ENCODE measurements at regions of chr9 and their contacts with region 1.

Region 1: DNA sequence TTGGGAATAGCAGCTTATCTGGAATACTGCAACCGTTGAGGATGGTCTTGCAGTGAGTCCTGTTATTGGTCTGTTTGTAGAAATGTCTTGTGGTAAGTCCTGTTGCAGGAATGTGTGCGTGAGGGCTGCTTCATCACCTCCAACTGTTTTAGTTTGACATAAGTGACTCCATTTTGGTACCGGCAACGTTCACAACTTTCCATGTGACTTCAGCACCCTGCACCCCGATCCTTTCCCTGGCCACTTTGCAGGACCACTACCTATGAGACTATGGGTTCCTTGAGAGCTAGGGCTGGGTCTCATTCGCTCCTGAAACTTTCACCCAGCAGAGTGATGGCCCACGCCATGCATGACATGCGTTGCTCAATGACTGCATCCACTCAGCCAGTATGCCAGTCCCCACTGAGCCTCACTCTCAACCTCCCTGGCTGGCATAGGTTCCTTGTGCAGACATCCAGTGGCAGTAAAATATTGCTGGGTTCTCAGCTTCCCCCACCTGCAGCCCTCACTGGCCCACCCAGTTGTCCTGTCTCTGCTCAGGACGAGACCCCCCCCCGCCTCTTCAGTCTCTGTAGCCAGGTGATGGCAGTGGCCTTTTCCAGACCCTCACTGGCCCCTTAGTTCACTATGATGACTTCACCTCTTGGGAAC is 8.0 kb downstream of the SURF6 start:
- DNase-seq: no peak
- ATAC-seq: no peak
- H3K4me3 Mint-ChIP-seq: no peak overlapping the region
- H3K27ac Mint-ChIP-seq: no peak overlapping the region
- H3K4me1 Mint-ChIP-seq: peaks cover 12% of the 10 kb centered on the region
- H3K27me3 Mint-ChIP-seq: no peaks in the 10 kb centered on the region
- CTCF ChIP-seq: no peak

Region 2: GRCh38 chr9:133238851-133239532 is 89.0 kb before region 1 on chr9:
- CTCF ChIA-PET with region 1: interaction called, 29 read pairs
- POLR2A ChIA-PET with region 1: no interaction called
- intact Hi-C with region 1: no loop called
- DNase-seq: peak; percentile 85
- ATAC-seq: peak; percentile 97
- H3K4me3 Mint-ChIP-seq: peak overlapping the region; percentile 54
- H3K27ac Mint-ChIP-seq: no peak overlapping the region
- H3K4me1 Mint-ChIP-seq: peaks cover 3% of the 10 kb centered on the region
- H3K27me3 Mint-ChIP-seq: peaks cover 11% of the 10 kb centered on the region
- CTCF ChIP-seq: peak; percentile 83

Measured in activated CD8-positive, alpha-beta T cell treated with anti-CD3 and anti-CD28 coated beads for 36 hours (primary cell).